Aorta (tissue), 5 donors: ENCODE measurements at regions of chr6 and their contacts with region 1.

Region 1: DNA sequence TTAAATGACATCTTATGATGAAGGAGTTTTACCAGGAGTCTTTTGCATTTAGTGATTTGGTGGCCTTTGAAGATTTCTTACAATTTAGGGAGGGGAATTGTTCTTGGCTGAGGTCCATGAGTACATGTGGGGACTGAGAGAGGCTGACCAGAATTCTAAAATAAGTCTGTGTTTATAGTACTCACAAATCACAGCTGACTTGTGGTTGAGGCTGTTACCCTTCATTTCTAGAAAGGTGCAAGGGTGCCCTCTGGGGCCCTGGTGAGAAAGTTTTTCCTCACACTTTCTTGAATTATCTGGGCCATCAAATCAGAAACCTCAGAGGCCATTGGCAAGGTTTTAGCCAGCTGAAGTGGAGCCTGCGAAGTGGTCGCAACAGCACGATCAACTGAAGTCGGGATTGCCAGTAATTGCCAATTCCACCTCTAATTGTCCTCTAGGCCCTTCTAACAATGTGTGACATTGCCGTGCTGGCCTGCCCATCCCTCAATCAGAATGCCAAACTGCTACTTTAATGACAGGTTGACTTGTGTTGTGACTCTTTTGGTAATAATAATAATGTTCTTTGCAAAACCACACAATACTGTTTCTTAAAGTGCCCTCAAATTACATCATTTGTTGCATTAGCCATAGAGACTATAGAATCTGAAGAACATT is 221.6 kb downstream of the OGFRL1 start:
- DNase-seq: peak; percentile 64 to 82
- ATAC-seq: peak; percentile 86
- H3K4me3 ChIP-seq: no peak overlapping the region
- H3K27ac ChIP-seq: no peak overlapping the region
- H3K4me1 ChIP-seq: peaks cover 0 to 2% of the 10 kb centered on the region in 2 donors
- H3K27me3 ChIP-seq: no peaks in the 10 kb centered on the region

Region 2: DNA sequence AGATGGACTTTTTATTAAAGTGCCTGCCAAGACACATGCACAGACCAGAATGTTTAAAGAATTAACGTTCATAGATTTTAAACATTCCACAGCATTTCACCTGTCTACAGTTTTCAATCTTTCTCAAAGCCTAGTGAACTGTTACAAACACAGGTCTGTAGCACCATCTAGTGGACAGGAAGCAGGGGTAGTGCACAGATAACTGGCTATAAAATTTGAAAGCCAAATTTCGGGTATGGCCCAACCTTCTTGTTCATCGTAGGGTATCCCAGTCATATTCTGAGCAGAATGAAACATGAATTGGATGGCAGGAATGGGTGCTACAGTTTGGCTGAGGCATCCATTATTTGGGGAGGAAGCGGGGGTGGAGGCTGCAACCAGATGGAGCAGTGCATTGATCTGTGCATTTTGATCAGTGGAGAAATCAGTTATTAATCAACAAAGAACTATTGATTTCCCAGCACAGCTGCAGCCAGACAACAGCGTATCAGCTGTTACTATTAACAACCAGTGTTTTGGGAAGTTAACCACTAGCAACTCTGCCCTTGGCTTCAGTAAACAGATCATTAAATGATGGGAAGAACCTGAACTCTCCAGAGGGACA is 497.2 kb before region 1 on chr6:
- intact Hi-C with region 1: no loop called
- DNase-seq: no peak
- ATAC-seq: peak; percentile 77
- H3K4me3 ChIP-seq: no peak overlapping the region
- H3K27ac ChIP-seq: no peak overlapping the region
- H3K4me1 ChIP-seq: no peaks in the 10 kb centered on the region
- H3K27me3 ChIP-seq: no peaks in the 10 kb centered on the region

Region 3: GRCh38 chr6:71190809-71191208 is 319.4 kb before region 1 on chr6:
- intact Hi-C with region 1: loop called in 1 of 2 experiments (anchors 10 kb)
- DNase-seq: no peak
- ATAC-seq: no peak
- H3K4me3 ChIP-seq: no peak overlapping the region
- H3K27ac ChIP-seq: no peak overlapping the region
- H3K4me1 ChIP-seq: peaks cover 0 to 2% of the 10 kb centered on the region in 2 donors
- H3K27me3 ChIP-seq: no peaks in the 10 kb centered on the region

Region 4: GRCh38 chr6:71383901-71384489 is 126.2 kb before region 1 on chr6:
- intact Hi-C with region 1: loop called (anchors 1 kb)
- DNase-seq: no peak
- ATAC-seq: no peak
- H3K4me3 ChIP-seq: no peak overlapping the region
- H3K27ac ChIP-seq: no peak overlapping the region
- H3K4me1 ChIP-seq: peaks cover 2 to 4% of the 10 kb centered on the region in 2 donors
- H3K27me3 ChIP-seq: no peaks in the 10 kb centered on the region

Region 5: DNA sequence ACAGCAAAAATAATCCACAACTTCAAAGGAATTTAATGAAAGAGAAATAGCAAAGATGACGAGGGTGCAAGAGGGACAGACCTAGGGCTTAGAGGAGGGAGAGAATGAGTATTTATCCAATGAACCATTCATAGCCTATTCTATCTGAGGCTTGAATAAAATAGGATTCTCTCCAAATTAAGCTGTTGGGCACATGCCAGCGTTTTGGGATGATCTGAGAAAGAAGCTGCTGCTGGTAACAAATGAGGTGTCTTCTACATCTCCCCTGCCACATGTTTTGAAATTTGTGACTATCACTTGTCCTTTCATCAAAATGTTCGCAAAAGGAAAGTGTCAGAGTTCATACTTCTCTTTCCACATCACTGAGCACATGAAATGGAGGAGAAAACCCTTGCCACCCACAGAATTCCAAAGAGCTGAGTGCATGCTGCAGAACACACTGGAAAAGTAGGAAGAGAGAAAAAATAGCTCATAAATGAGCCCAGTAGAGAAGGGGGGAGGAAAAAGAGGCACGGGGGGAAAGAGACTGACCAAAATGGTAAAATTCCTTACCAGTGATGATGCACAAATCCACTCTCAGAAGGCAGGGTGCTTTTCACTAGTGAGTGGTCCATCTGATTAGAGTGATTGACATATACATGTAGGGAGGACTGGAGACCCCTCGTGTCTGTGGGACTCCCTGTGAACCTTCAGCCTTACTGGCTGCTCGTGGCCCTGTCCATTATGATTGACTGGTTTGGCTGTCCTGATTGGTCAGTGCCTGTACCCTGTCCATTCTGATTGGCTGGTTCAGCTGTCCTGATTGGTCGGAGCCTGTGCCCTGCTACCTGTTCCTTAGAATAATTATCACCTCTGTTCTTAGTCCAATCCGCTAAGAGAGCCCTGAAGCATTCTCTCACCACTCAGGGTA is 41.1 kb before region 1 on chr6:
- intact Hi-C with region 1: loop called (anchors 5 kb)
- DNase-seq: no peak
- ATAC-seq: peak; percentile 77
- H3K4me3 ChIP-seq: peak overlapping the region; percentile 36 to 48
- H3K27ac ChIP-seq: peak overlapping the region; percentile 70 to 99
- H3K4me1 ChIP-seq: no peaks in the 10 kb centered on the region
- H3K27me3 ChIP-seq: no peaks in the 10 kb centered on the region

Region 6: GRCh38 chr6:71544028-71544427 is 33.8 kb after region 1 on chr6:
- intact Hi-C with region 1: no loop called
- DNase-seq: no peak
- ATAC-seq: no peak
- H3K4me3 ChIP-seq: no peak overlapping the region
- H3K27ac ChIP-seq: no peak overlapping the region
- H3K4me1 ChIP-seq: no peaks in the 10 kb centered on the region
- H3K27me3 ChIP-seq: no peaks in the 10 kb centered on the region